Caco-2 (cell line): ENCODE measurements at regions of chr2 and their contacts with region 1.

Region 1: DNA sequence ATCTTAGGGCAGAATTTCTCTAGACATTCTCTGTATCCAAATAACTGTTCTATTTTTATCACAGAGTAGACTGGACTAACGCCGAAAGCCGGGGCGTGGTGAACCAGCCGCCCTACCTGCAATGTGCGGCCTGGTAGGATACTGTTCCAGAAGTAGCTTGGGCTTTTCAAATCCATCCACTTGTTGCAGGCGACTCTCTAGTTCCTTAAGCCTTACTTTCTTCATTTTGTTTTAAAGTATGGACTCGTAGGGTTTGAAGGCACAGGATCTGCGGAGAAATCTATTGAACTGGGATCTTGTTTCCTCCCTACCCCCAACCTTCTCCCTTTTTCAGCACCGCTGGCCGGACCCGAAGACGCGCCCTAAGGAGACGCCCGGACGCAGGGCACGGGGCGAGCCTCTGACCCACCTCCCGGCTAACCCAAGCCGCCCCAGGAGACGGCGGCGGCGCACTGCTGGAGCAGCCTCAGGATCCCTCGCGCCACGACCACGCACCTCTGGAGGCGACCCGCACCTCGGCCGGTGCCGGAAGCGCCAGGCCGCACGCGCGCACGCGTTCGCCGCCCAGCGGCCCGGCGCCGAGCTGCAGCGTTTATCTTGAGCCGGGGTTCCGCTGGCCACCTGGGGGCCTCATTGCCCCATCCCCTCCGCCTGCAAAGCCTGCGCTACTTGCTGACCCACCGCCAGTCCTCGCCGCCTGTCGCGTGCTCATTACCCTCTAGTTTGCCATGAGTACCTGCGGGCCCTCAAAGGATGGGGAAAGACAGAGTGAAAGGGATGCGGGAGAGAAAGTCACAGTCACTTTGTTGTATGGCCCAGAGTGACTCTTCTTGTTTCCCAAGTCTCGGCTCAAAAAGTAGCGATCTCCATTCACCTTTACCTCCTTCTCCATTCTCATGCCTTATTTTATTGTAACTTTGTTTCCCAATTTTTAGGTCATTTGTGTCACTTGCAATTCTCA is at the start of gene METTL5:
- DNase-seq: peak; percentile 89 to 95
- H3K4me3 ChIP-seq: peak within 1 kb of the TSS; percentile 81
- H3K4me3 Mint-ChIP-seq: peak within 1 kb of the TSS; percentile 69
- H3K27ac Mint-ChIP-seq: peak within 1 kb of the TSS; percentile 68
- H3K4me1 ChIP-seq: peaks cover 4% of the 10 kb centered on the region
- H3K4me1 Mint-ChIP-seq: peaks cover 19% of the 10 kb centered on the region
- H3K27me3 ChIP-seq: no peaks in the 10 kb centered on the region
- H3K27me3 Mint-ChIP-seq: no peaks in the 10 kb centered on the region
- CTCF ChIP-seq: peak; percentile 93 to 97
- total RNA-seq, gene METTL5: 75.1 and 82.4 TPM in 2 replicates

Region 2: GRCh38 chr2:169798718-169799592 is 25.7 kb before region 1 on chr2 and contains the start of gene SSB:
- CTCF ChIA-PET with region 1: no interaction called
- POLR2A ChIA-PET with region 1: interaction called, 14 read pairs
- intact Hi-C with region 1: no loop called
- DNase-seq: peak; percentile 94 to 96
- H3K4me3 ChIP-seq: peak within 1 kb of the TSS; percentile 68
- H3K4me3 Mint-ChIP-seq: peak within 1 kb of the TSS; percentile 86
- H3K27ac Mint-ChIP-seq: peak within 1 kb of the TSS; percentile 85
- H3K4me1 ChIP-seq: peaks cover 16% of the 10 kb centered on the region
- H3K4me1 Mint-ChIP-seq: peaks cover 18% of the 10 kb centered on the region
- H3K27me3 ChIP-seq: no peaks in the 10 kb centered on the region
- H3K27me3 Mint-ChIP-seq: no peaks in the 10 kb centered on the region
- CTCF ChIP-seq: no peak
- total RNA-seq, gene SSB: 209 and 215 TPM in 2 replicates

Region 3: GRCh38 chr2:169877398-169877797 is 52.7 kb after region 1 on chr2:
- CTCF ChIA-PET with region 1: interaction called, 14 read pairs
- POLR2A ChIA-PET with region 1: interaction called, 4 read pairs
- intact Hi-C with region 1: loop called (anchors 1 kb)
- DNase-seq: no peak
- H3K4me3 ChIP-seq: no peak overlapping the region
- H3K4me3 Mint-ChIP-seq: no peak overlapping the region
- H3K27ac Mint-ChIP-seq: no peak overlapping the region
- H3K4me1 ChIP-seq: no peaks in the 10 kb centered on the region
- H3K4me1 Mint-ChIP-seq: no peaks in the 10 kb centered on the region
- H3K27me3 ChIP-seq: no peaks in the 10 kb centered on the region
- H3K27me3 Mint-ChIP-seq: no peaks in the 10 kb centered on the region
- CTCF ChIP-seq: no peak

Region 4: DNA sequence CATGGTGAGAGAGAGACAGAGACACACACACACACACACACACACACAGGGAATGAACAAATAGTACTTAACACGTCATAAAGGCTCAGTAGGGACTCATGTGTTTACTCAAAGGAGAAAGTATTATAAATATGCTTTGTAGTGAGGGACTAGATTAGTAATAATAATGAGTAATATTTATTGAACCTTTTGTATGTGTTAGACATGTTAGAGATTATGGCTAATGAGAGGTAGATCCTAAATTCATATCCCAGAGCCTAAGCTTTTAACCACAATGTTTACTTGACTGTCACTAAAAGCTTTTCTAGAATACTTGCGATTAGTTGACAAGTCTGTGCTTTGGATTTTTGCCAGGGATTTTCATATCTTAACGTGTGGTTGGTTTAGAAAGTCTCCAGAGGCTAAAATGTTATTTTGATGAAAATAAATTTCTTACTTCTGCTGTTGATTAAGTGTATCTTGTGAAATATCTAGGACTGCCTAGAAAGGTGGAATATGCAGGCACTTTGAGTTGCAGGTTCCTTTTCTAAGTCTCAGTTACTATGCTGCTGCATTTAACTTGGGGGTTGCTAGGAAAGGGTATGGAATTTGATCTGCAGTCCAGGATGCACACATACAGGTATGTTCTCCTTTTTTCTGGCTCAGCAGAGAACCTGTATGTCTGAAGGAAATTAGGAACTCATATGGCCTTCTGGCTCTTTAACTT is 67.1 kb after region 1 on chr2:
- CTCF ChIA-PET with region 1: no interaction called
- POLR2A ChIA-PET with region 1: no interaction called
- intact Hi-C with region 1: loop called (anchors 5 kb)
- DNase-seq: peak in 1 of 2 experiments; percentile 56
- H3K4me3 ChIP-seq: no peak overlapping the region
- H3K4me3 Mint-ChIP-seq: no peak overlapping the region
- H3K27ac Mint-ChIP-seq: peak overlapping the region; percentile 24
- H3K4me1 ChIP-seq: peaks cover 15% of the 10 kb centered on the region
- H3K4me1 Mint-ChIP-seq: peaks cover 18% of the 10 kb centered on the region
- H3K27me3 ChIP-seq: no peaks in the 10 kb centered on the region
- H3K27me3 Mint-ChIP-seq: no peaks in the 10 kb centered on the region
- CTCF ChIP-seq: no peak

Region 5: GRCh38 chr2:169933124-169933711 is 108.6 kb after region 1 on chr2:
- CTCF ChIA-PET with region 1: interaction called, 5 read pairs
- POLR2A ChIA-PET with region 1: no interaction called
- intact Hi-C with region 1: loop called (anchors 1 kb)
- DNase-seq: peak in 1 of 2 experiments; percentile 22
- H3K4me3 ChIP-seq: no peak overlapping the region
- H3K4me3 Mint-ChIP-seq: no peak overlapping the region
- H3K27ac Mint-ChIP-seq: no peak overlapping the region
- H3K4me1 ChIP-seq: no peaks in the 10 kb centered on the region
- H3K4me1 Mint-ChIP-seq: no peaks in the 10 kb centered on the region
- H3K27me3 ChIP-seq: no peaks in the 10 kb centered on the region
- H3K27me3 Mint-ChIP-seq: no peaks in the 10 kb centered on the region
- CTCF ChIP-seq: peak; percentile 49 to 70

Region 6: DNA sequence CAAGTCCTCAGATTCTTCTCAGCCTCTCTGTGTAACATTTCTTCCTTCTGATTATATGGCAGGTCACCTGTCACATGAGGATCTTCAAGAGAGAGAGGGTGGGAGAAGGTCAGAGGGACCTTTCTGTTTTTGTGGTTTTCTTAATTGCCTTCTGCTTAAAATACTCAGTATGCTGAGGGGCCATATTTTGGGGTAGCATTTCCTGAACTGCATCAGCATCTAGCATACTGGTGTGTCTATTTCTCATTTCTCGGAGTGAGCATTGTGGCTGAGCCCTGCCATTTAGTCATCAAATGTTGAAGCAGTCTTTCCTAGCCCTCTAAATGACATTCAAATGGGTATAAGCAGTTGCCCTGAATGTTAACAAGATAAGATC is 516.0 kb after region 1 on chr2:
- CTCF ChIA-PET with region 1: no interaction called
- POLR2A ChIA-PET with region 1: no interaction called
- intact Hi-C with region 1: no loop called
- DNase-seq: no peak
- H3K4me3 ChIP-seq: no peak overlapping the region
- H3K4me3 Mint-ChIP-seq: no peak overlapping the region
- H3K27ac Mint-ChIP-seq: no peak overlapping the region
- H3K4me1 ChIP-seq: peaks cover 6% of the 10 kb centered on the region; the same call in 1 of the 2 replicates
- H3K4me1 Mint-ChIP-seq: no peaks in the 10 kb centered on the region
- H3K27me3 ChIP-seq: no peaks in the 10 kb centered on the region; the same call in 1 of the 2 replicates
- H3K27me3 Mint-ChIP-seq: no peaks in the 10 kb centered on the region
- CTCF ChIP-seq: no peak